PC-3 (cell line): ENCODE measurements at regions of chr20 and their contacts with region 1.

Region 1: GRCh38 chr20:4512891-4513550 is 208.7 kb upstream of the PRND start:
- DNase-seq: peak; percentile 99
- ATAC-seq: peak; percentile 79
- H3K4me3 ChIP-seq: peak overlapping the region; percentile 40
- H3K27ac ChIP-seq: peak overlapping the region; percentile 94
- H3K4me1 ChIP-seq: peaks cover 42% of the 10 kb centered on the region
- H3K27me3 ChIP-seq: no peaks in the 10 kb centered on the region
- CTCF ChIP-seq: no peak

Region 2: DNA sequence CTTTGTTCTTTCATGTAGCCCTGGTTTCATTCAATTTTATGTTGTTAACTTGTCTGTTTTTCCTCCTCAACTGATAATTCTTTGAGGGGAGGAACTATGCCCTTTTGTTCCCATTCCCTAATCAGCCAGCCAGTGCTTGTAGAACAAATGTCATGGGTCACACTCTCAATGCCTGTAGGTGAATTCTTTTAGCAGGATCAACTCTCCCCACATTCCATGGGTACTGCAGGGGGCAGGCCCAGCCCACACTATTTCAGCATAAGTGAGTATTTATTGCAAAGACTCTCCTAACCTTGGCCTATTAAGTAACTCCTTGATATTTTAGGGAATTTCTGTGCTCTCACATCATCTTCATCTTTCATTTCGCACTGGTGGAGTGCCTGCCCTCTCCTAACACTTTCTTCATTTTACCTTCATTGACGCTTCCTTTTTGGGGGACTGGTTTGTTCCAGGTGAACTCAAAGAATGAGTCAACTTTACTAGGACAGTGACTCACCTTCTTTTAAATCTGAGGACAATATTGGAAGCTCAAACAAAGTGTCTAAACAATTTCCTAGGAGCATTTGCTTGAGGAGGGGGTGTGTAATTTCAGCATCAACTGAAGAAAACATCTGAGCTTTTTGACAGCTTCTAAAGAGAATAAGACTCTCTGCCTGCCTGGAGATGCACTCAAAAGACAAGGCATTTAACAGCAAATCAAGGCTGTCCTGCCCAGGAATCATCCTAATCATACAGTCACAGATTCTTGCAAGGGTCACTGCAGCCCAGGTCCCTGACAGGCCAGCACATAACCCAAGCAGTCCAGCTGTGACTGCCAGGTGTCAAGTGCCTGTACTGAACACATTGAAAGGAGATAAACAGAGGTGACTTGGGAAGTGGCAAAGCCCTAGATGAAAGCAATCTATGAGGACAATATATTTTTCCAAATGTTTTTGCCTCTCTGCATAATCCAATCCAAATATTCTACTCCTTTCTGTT is 55.2 kb before region 1 on chr20:
- CTCF ChIA-PET with region 1: no interaction called
- POLR2A ChIA-PET with region 1: no interaction called
- intact Hi-C with region 1: loop called (anchors 5 kb)
- DNase-seq: peak; percentile 93
- ATAC-seq: peak; percentile 75
- H3K4me3 ChIP-seq: peak overlapping the region; percentile 21; the same call in 1 of the 2 replicates
- H3K27ac ChIP-seq: peak overlapping the region; percentile 84
- H3K4me1 ChIP-seq: peaks cover 52% of the 10 kb centered on the region
- H3K27me3 ChIP-seq: no peaks in the 10 kb centered on the region
- CTCF ChIP-seq: no peak

Region 3: GRCh38 chr20:4592316-4593148 is 79.5 kb after region 1 on chr20:
- CTCF ChIA-PET with region 1: no interaction called
- POLR2A ChIA-PET with region 1: no interaction called
- intact Hi-C with region 1: loop called (anchors 1 kb)
- DNase-seq: peak; percentile 84
- ATAC-seq: peak; percentile 75
- H3K4me3 ChIP-seq: peak overlapping the region; percentile 66
- H3K27ac ChIP-seq: peak overlapping the region; percentile 64
- H3K4me1 ChIP-seq: peaks cover 14% of the 10 kb centered on the region
- H3K27me3 ChIP-seq: no peaks in the 10 kb centered on the region
- CTCF ChIP-seq: peak; percentile 97